Breast epithelium (tissue), 4 donors: ENCODE measurements at regions of chr6 and their contacts with region 1.

Region 1: DNA sequence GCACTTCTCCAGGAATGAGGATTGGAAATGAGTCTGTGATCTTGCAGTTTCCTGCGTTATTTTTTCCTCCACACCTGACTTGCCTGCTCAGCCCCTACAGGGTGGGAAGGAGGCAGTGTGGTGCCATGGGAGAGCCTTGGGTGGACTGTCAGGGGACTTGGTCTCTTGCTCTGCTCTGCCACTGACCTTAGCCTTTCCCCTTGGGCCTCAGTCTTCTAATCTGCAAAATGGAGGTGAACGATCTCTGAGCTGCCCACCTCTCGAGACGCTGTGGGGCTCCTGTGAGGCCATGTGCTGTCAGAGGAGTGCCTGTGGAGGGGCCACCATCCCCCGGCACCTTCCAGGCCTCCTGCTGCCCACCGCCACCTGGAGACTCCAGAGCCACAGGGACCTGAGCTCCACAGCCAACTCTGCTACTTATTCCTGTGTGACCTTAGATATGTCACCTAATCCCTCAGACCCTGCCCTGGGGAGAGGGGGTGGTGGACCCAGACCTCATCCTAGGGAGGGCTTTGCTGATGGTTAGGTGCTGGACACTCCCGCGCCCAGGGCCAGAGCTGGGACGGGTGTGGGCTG is 45.8 kb upstream of the MLN start:
- DNase-seq: no peak
- H3K4me3 ChIP-seq: no peak overlapping the region
- H3K27ac ChIP-seq: no peak overlapping the region
- H3K4me1 ChIP-seq: no peaks in the 10 kb centered on the region
- H3K27me3 ChIP-seq: no peaks in the 10 kb centered on the region
- CTCF ChIP-seq: no peak
- POLR2A ChIP-seq: no peak

Region 2: DNA sequence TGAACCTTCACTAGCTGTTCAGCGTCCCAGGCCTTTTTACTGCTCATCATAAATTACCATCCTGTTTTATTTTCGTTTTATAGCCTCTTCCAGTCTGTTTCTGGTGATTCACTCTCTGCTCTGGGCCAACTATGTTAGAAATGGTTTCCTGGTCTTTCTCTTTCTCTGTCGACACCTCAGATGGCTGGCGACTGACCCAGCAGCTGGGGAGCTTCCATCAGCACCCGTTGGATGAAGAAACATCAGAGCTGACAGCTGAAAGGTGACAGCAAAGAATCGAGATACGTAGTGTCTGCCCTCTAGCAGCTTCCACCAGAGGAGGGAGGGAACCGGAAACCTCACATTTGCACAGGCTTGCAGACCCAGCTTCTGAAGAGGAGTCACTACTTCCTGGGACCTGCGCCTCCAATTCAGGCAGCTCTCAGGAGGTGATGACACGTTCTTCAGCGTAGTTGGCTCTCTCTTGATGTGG is 37.1 kb after region 1 on chr6:
- intact Hi-C with region 1: loop called (anchors 1 kb)
- DNase-seq: no peak
- H3K4me3 ChIP-seq: no peak overlapping the region
- H3K27ac ChIP-seq: no peak overlapping the region
- H3K4me1 ChIP-seq: no peaks in the 10 kb centered on the region
- H3K27me3 ChIP-seq: no peaks in the 10 kb centered on the region
- CTCF ChIP-seq: no peak
- POLR2A ChIP-seq: no peak